Right cardiac atrium (tissue), 5 donors: ENCODE measurements at regions of chr16 and their contacts with region 1.

Region 1: GRCh38 chr16:13935408-13935807 is 15.5 kb downstream of the ERCC4 start:
- DNase-seq: no peak
- ATAC-seq: no peak
- H3K4me3 ChIP-seq: no peak overlapping the region
- H3K27ac ChIP-seq: no peak overlapping the region
- H3K4me1 ChIP-seq: peaks cover 5% of the 10 kb centered on the region
- H3K27me3 ChIP-seq: no peaks in the 10 kb centered on the region

Region 2: DNA sequence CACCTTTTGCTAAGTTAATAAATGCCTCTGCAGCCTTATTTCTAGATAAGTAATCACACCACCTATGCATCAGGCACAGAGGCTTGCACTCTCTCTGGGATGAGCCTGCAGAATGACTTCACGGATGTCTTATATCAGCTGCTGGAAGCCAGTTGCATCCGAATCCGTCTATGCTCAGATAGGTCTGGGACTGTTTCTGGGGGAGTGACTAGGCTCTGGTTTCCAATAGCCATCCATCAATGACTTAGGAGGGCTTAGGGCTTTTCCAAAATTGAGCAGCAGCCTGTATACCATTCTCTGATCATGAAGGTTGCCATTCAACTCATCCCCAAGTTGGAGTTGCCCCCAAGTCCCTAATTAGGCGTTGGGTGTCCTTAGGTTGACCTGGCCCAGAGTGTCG is 128.7 kb before region 1 on chr16:
- intact Hi-C with region 1: no loop called
- DNase-seq: no peak
- ATAC-seq: no peak
- H3K4me3 ChIP-seq: no peak overlapping the region
- H3K27ac ChIP-seq: no peak overlapping the region
- H3K4me1 ChIP-seq: no peaks in the 10 kb centered on the region
- H3K27me3 ChIP-seq: no peaks in the 10 kb centered on the region

Region 3: GRCh38 chr16:13863075-13863765 is 72.2 kb before region 1 on chr16:
- intact Hi-C with region 1: no loop called
- DNase-seq: no peak
- ATAC-seq: no peak
- H3K4me3 ChIP-seq: no peak overlapping the region
- H3K27ac ChIP-seq: no peak overlapping the region
- H3K4me1 ChIP-seq: no peaks in the 10 kb centered on the region
- H3K27me3 ChIP-seq: no peaks in the 10 kb centered on the region

Region 4: DNA sequence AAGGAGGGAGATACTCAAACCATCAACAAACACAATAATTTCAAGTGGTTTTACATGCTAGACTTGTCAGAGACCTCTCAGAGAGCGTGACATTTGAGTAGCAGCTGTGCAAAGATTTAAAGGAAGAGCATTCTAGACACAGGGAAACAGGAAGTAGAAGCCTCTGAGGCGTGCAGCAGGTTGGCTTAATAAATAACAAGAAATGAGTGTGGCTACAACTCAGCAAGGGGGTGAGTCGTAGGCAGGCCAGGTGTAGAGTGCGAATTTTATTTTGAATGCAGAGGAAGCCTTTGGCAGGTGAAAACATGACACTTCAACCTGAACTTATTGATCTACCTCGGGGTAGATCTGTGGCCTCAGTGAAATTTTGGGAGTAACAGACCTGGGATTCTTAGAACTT is 62.5 kb after region 1 on chr16:
- intact Hi-C with region 1: loop called in 1 of 4 experiments (anchors 10 kb)
- DNase-seq: no peak
- ATAC-seq: no peak
- H3K4me3 ChIP-seq: no peak overlapping the region
- H3K27ac ChIP-seq: peak overlapping the region; percentile 10
- H3K4me1 ChIP-seq: peaks cover 16% of the 10 kb centered on the region
- H3K27me3 ChIP-seq: no peaks in the 10 kb centered on the region

Region 5: GRCh38 chr16:14011006-14011405 is 75.6 kb after region 1 on chr16:
- intact Hi-C with region 1: no loop called
- DNase-seq: no peak
- ATAC-seq: no peak
- H3K4me3 ChIP-seq: no peak overlapping the region
- H3K27ac ChIP-seq: no peak overlapping the region
- H3K4me1 ChIP-seq: peaks cover 8% of the 10 kb centered on the region
- H3K27me3 ChIP-seq: no peaks in the 10 kb centered on the region

Region 6: DNA sequence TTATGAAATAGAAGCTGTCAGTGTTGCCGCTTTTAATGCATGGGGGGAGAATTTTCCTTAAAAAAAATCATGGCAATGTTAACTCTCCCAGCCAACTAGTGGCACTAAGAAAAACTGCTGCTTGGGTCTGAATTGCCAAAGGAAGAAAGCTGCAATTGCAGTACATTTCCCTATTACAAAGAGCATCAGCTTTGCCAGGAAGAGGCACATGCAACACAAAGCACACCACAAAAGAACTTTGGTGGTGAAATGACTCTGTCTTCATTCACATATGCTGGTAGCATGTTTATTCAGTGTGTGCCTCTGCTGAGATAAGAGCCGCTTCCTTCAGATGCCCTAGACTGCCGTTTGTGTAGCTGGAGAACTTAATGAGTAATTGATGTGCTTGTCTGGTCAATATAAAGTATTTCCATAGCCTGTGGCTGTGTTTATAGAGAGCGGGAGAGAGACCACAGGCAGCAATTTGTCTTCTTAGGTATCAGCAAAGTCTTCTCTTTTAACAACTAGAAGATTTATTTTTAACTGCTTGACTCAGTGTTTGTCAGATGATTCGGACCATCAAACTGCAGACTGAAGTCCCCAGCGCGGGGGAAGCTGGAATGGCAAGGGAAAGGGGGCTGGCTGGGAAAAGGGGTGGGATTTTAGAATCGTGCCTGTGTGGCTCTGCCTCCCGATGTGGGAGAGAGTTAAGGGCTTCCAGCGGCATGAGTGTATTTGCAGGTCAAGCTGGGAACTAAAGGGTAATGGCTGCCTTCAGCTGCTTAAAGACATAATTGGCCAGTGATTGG is 250.8 kb after region 1 on chr16:
- intact Hi-C with region 1: no loop called
- DNase-seq: peak; percentile 30 to 72 (median 69)
- ATAC-seq: peak; percentile 77 to 82
- H3K4me3 ChIP-seq: peak overlapping the region; percentile 73
- H3K27ac ChIP-seq: peak overlapping the region; percentile 97
- H3K4me1 ChIP-seq: peaks cover 4% of the 10 kb centered on the region
- H3K27me3 ChIP-seq: no peaks in the 10 kb centered on the region